Endothelial cell of umbilical vein (primary cell): ENCODE measurements at regions of chr18 and their contacts with region 1.

Region 1: GRCh38 chr18:50281295-50281971 is at the start of gene MBD1:
- DNase-seq: peak; percentile 99
- H3K4me3 ChIP-seq: peak within 1 kb of the TSS; percentile 79 to 89 (median 84)
- H3K27ac ChIP-seq: peak within 1 kb of the TSS; percentile 60
- H3K4me1 ChIP-seq: peaks cover 25% of the 10 kb centered on the region
- H3K27me3 ChIP-seq: no peaks in the 10 kb centered on the region
- CTCF ChIP-seq: peak in 1 of 2 donors; percentile 26
- POLR2A ChIP-seq: peak; percentile 89
- total RNA-seq, gene MBD1: 77.5 and 78.6 TPM in 2 replicates

Region 2: DNA sequence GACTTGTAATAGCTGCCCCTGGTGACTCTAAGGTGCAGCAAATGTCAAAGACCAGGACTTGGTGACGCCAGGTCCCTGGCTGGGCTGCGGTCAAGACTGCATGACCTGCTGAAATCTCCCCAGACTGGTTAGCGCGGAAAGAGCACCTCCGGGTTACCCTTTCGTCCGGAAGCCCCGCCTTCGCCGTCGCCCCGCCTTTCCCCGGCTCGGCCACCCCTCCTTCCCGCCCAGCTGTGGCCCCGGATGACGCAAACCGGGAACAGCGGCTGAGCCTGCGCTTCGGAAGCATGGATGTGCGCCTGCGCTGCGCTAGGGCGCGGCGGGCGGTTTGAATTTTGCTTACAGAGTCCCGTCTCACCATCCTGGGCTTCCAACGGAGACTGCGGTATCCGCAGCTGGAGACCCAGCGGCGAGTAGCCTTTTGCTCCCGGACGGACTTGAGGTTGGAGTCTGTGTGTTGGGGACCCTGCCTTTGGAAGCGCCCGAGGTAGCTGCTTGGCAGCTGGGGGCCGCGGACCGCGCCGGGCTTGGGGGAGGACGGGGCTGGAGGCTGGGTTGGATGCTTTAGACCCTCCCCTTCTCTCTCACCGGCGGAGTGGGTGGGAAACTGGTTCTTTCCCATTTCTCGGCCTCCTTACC is 93.4 kb after region 1 on chr18 and contains the start of gene SKA1:
- CTCF ChIA-PET with region 1: no interaction called
- POLR2A ChIA-PET with region 1: no interaction called
- dilution Hi-C with region 1: no loop called
- intact Hi-C with region 1: loop called (anchors 1 kb)
- DNase-seq: peak; percentile 95
- H3K4me3 ChIP-seq: peak within 1 kb of the TSS; percentile 49 to 88 (median 58)
- H3K27ac ChIP-seq: peak within 1 kb of the TSS; percentile 21
- H3K4me1 ChIP-seq: peaks cover 9% of the 10 kb centered on the region
- H3K27me3 ChIP-seq: peaks cover 0 to 3% of the 10 kb centered on the region in 2 experiments
- CTCF ChIP-seq: no peak
- POLR2A ChIP-seq: peak; percentile 79
- total RNA-seq, gene SKA1: 21.9 and 23.9 TPM in 2 replicates

Region 3: GRCh38 chr18:51537487-51537886 is 1256.1 kb after region 1 on chr18:
- CTCF ChIA-PET with region 1: no interaction called
- POLR2A ChIA-PET with region 1: no interaction called
- dilution Hi-C with region 1: no loop called
- intact Hi-C with region 1: no loop called
- DNase-seq: no peak
- H3K4me3 ChIP-seq: no peak overlapping the region
- H3K27ac ChIP-seq: no peak overlapping the region
- H3K4me1 ChIP-seq: no peaks in the 10 kb centered on the region
- H3K27me3 ChIP-seq: no peaks in the 10 kb centered on the region
- CTCF ChIP-seq: no peak
- POLR2A ChIP-seq: no peak